AG04450 (cell line): ENCODE measurements at regions of chr17 and their contacts with region 1.

Region 1: GRCh38 chr17:75405365-75406221 is at the start of gene GRB2:
- DNase-seq: peak; percentile 89
- H3K4me3 ChIP-seq: peak within 1 kb of the TSS; percentile 93
- H3K27ac ChIP-seq: peak within 1 kb of the TSS; percentile 65
- H3K27me3 ChIP-seq: peaks cover 2% of the 10 kb centered on the region
- CTCF ChIP-seq: no peak
- polyA plus RNA-seq, gene GRB2: 53.9 and 63.8 TPM in 2 replicates

Region 2: DNA sequence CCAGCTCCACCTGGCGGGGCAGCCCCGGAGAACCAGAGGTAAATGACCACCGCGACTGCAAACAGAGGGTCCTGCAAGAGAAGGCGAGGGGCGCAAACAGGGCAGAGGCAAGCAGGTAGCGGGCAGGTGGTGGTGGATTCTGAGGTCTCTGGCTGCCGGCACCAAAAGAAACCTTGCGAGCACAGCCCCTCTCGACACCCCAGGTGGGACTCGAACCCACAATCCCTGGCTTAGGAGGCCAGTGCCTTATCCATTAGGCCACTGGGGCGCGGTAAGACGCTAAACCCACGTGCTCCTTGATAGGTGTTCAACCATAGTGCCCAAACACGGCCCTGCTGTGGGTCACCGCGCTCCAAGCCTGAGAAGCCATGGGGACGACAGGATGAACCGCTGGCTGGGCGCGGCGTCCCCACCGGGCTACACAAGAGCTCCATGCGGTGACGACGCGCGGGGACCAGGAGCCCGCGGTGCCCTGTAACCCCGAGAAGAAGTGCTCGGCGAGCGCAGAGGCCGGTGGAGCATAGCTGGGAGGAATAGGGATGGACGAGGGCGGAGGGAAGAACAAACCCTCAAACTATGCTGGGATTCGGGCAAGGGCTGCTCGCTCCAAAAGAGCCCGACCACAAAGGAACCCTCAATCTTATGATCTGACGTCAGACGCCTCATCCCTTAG is 371.2 kb before region 1 on chr17:
- CTCF ChIA-PET with region 1: no interaction called
- POLR2A ChIA-PET with region 1: no interaction called
- DNase-seq: peak; percentile 73
- H3K4me3 ChIP-seq: peak overlapping the region; percentile 71
- H3K27ac ChIP-seq: peak overlapping the region; percentile 99
- H3K27me3 ChIP-seq: no peaks in the 10 kb centered on the region
- CTCF ChIP-seq: no peak

Region 3: GRCh38 chr17:75261336-75262111 is 144.1 kb before region 1 on chr17 and contains the starts of genes GGA3 and MRPS7:
- CTCF ChIA-PET with region 1: interaction called, 3 read pairs
- POLR2A ChIA-PET with region 1: interaction called, 10 read pairs
- DNase-seq: peak; percentile 76
- H3K4me3 ChIP-seq: peak within 1 kb of the TSS; percentile 95
- H3K27ac ChIP-seq: peak within 1 kb of the TSS; percentile 98
- H3K27me3 ChIP-seq: no peaks in the 10 kb centered on the region
- CTCF ChIP-seq: no peak
- polyA plus RNA-seq, gene GGA3: 25.0 and 25.8 TPM in 2 replicates
- polyA plus RNA-seq, gene MRPS7: 53.8 and 62.6 TPM in 2 replicates

Region 4: DNA sequence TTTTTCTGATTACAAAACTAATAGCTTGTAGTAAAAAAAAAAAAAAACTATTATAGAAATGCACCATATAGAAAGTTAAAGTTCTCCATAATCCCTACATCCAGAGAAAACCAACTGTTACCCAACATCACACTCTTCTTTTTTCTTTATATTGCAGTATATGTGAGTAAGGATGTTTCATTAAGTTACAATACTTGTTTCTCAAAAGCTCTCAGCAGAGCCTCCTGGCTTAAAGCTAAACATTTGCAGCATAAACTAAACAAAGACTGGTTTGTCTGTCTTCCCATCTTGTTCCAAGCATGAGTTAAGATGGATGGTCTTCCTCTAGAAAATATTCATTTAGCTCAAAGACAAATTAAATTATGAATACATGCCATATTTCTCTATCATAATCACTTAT is 25.3 kb before region 1 on chr17:
- CTCF ChIA-PET with region 1: interaction called, 10 read pairs
- POLR2A ChIA-PET with region 1: no interaction called
- DNase-seq: peak; percentile 32
- H3K4me3 ChIP-seq: no peak overlapping the region
- H3K27ac ChIP-seq: no peak overlapping the region
- H3K27me3 ChIP-seq: no peaks in the 10 kb centered on the region
- CTCF ChIP-seq: peak; percentile 26; the same call in 1 of the 2 replicates

Region 5: GRCh38 chr17:75393523-75394331 is 11.9 kb before region 1 on chr17:
- CTCF ChIA-PET with region 1: interaction called, 3 read pairs
- POLR2A ChIA-PET with region 1: interaction called, 12 read pairs
- DNase-seq: peak; percentile 96
- H3K4me3 ChIP-seq: peak overlapping the region; percentile 80
- H3K27ac ChIP-seq: peak overlapping the region; percentile 71
- H3K27me3 ChIP-seq: no peaks in the 10 kb centered on the region
- CTCF ChIP-seq: no peak